Activated B cell treated with CpG ODN at 0.5 μM for 24 hours (primary cell): ENCODE measurements at regions of chr4 and their contacts with region 1.

Region 1: GRCh38 chr4:102564399-102565059 is 63.4 kb downstream of the NFKB1 start:
- DNase-seq: peak; percentile 37
- ATAC-seq: peak; percentile 91
- H3K4me3 Mint-ChIP-seq: peak overlapping the region; percentile 61
- H3K27ac Mint-ChIP-seq: peak overlapping the region; percentile 90
- H3K4me1 Mint-ChIP-seq: peaks cover 85% of the 10 kb centered on the region
- H3K27me3 Mint-ChIP-seq: no peaks in the 10 kb centered on the region
- CTCF ChIP-seq: no peak

Region 2: DNA sequence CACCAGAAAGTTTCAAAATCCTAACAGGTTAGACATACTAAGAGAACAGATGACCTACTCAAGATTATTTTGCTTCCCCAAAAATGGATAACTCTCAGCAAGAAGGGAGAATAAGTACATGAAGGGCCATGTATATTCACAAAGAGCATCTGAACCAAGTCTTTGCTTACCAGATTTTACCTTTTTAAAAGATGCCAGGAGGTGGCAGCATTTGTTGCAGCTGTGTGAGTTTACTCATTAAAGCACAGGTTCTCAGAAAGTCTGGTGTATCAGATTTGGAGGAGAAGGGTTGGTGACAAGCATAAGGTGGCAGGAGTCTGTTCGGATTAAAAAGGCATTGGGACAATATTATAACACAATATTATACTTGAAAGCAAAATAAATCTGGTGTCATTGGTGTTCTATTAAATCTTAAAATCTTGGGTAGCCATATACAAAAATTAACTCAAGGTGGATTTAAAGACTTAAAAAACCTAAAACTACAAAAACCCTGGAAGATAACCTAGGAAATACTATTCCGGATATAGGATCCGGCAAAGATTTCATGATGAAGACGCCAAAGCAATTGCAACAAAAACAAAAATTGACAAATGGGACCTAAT is 114.7 kb before region 1 on chr4:
- CTCF ChIA-PET with region 1: no interaction called
- POLR2A ChIA-PET with region 1: no interaction called
- intact Hi-C with region 1: loop called (anchors 1 kb)
- DNase-seq: no peak
- ATAC-seq: peak; percentile 85
- H3K4me3 Mint-ChIP-seq: no peak overlapping the region
- H3K27ac Mint-ChIP-seq: no peak overlapping the region
- H3K4me1 Mint-ChIP-seq: peaks cover 21% of the 10 kb centered on the region
- H3K27me3 Mint-ChIP-seq: no peaks in the 10 kb centered on the region
- CTCF ChIP-seq: no peak

Region 3: GRCh38 chr4:102535398-102536082 is 29.0 kb before region 1 on chr4:
- CTCF ChIA-PET with region 1: no interaction called
- POLR2A ChIA-PET with region 1: interaction called, 10 read pairs
- intact Hi-C with region 1: loop called (anchors 2 kb)
- DNase-seq: no peak
- ATAC-seq: peak; percentile 82
- H3K4me3 Mint-ChIP-seq: peak overlapping the region; percentile 55
- H3K27ac Mint-ChIP-seq: peak overlapping the region; percentile 71
- H3K4me1 Mint-ChIP-seq: peaks cover 40% of the 10 kb centered on the region
- H3K27me3 Mint-ChIP-seq: no peaks in the 10 kb centered on the region
- CTCF ChIP-seq: no peak

Region 4: GRCh38 chr4:102554482-102554881 is 10.0 kb before region 1 on chr4:
- CTCF ChIA-PET with region 1: interaction called, 6 read pairs
- POLR2A ChIA-PET with region 1: interaction called, 10 read pairs
- intact Hi-C with region 1: loop called (anchors 1 kb)
- DNase-seq: no peak
- ATAC-seq: no peak
- H3K4me3 Mint-ChIP-seq: no peak overlapping the region
- H3K27ac Mint-ChIP-seq: peak overlapping the region; percentile 15
- H3K4me1 Mint-ChIP-seq: peaks cover 66% of the 10 kb centered on the region
- H3K27me3 Mint-ChIP-seq: no peaks in the 10 kb centered on the region
- CTCF ChIP-seq: no peak

Region 5: DNA sequence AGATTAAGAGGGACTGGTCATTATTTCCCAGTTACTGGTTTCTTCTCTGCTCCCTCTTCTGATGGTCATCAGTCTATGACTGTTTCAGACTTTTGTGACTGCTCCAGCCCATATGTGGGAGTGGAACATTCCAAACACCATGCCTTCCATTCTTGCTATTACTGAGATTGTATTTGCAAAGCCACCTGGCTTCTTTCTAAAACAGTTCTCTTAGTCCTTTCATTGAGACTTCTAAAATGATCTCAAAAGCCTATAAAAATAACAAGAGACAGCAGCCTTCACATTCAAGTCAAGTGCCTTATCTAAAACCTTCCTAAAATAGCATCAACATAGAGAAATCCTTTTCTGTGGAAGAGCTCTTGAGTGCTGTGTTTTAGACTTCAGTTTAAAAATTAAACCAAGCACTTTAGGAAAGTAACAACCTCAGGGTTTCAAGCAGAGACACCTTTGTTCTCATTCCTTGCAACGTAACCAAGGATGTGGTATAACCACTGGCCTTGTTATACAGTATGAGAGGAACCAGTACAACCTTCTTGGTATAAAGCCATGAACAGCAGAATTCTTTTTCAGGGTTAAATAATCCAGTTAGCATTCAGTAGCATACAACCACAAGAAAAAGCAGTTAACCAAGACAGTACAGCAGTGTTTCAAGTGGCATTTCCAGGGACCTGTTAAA is 33.7 kb after region 1 on chr4:
- CTCF ChIA-PET with region 1: no interaction called
- POLR2A ChIA-PET with region 1: no interaction called
- intact Hi-C with region 1: loop called (anchors 1 kb)
- DNase-seq: no peak
- ATAC-seq: no peak
- H3K4me3 Mint-ChIP-seq: no peak overlapping the region
- H3K27ac Mint-ChIP-seq: peak overlapping the region; percentile 78
- H3K4me1 Mint-ChIP-seq: peaks cover 33% of the 10 kb centered on the region
- H3K27me3 Mint-ChIP-seq: no peaks in the 10 kb centered on the region
- CTCF ChIP-seq: no peak